ENCODE measurements at regions of chr1 and their contacts with region 1.

Region 1: DNA sequence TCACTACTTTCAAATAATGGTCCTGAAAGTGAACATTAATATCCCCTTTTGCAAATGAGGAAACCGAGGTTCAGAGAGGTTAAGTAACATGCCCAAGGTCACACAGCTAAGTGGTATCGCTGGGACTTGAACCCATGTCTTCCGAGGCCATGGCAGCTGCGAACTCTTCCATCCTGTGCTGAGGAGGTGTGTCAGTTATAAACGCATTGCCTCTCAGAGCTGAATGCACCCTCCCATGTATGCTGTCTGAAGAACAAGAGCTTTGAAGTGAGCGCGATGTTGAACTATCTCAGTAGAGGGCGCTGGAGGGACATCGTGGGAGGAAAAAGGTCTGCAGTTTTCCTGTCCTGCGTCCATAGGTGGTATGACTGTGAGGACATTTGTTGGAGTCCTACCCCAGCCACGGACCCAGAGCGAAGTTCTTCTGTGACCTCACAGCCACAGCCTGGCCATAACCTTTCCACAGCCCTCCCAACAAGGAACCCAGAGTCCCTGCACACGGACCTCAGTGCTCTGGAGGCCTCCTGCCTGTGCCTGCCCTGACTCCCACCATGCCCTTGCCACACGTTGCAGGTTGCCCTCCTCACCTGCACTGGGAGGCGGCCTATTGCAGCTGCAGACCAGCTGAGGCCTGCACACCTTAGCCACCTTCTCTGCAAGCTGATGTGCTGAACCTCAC is 7.5 kb downstream of the MYOC start:
- DNase-seq: peak; percentile 87
- H3K4me3 Mint-ChIP-seq: peak overlapping the region; percentile 2
- H3K27ac Mint-ChIP-seq: no peak overlapping the region
- H3K4me1 Mint-ChIP-seq: peaks cover 25% of the 10 kb centered on the region
- H3K27me3 Mint-ChIP-seq: peaks cover 19% of the 10 kb centered on the region
- CTCF ChIP-seq: peak; percentile 88

Region 2: DNA sequence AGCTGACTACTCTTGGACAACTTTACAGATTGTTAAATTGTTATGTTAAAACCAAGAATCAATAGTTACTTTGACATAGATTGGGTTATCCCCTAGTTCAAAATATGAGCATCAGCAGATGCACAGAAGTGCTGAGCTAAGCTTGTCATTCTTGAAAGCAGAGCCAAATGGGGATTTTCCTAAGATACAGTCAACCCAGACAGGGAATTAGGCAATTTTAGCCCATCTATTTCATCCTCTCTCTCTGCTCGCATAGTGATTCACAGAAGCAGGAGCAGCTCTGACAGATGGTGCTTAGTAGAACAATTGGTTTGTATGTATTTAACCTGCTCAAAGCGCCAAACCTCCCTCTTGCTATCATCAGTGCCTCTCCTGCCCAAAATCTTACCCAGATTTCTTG is 187.5 kb before region 1 on chr1:
- CTCF ChIA-PET with region 1: no interaction called
- intact Hi-C with region 1: no loop called
- DNase-seq: no peak
- H3K4me3 Mint-ChIP-seq: no peak overlapping the region
- H3K27ac Mint-ChIP-seq: no peak overlapping the region
- H3K4me1 Mint-ChIP-seq: no peaks in the 10 kb centered on the region
- H3K27me3 Mint-ChIP-seq: no peaks in the 10 kb centered on the region
- CTCF ChIP-seq: no peak

Region 3: GRCh38 chr1:171654942-171655745 is 10.2 kb after region 1 on chr1:
- CTCF ChIA-PET with region 1: interaction called, 11 read pairs
- intact Hi-C with region 1: no loop called
- DNase-seq: peak; percentile 50
- H3K4me3 Mint-ChIP-seq: no peak overlapping the region
- H3K27ac Mint-ChIP-seq: no peak overlapping the region
- H3K4me1 Mint-ChIP-seq: peaks cover 28% of the 10 kb centered on the region
- H3K27me3 Mint-ChIP-seq: no peaks in the 10 kb centered on the region
- CTCF ChIP-seq: peak; percentile 58

Region 4: DNA sequence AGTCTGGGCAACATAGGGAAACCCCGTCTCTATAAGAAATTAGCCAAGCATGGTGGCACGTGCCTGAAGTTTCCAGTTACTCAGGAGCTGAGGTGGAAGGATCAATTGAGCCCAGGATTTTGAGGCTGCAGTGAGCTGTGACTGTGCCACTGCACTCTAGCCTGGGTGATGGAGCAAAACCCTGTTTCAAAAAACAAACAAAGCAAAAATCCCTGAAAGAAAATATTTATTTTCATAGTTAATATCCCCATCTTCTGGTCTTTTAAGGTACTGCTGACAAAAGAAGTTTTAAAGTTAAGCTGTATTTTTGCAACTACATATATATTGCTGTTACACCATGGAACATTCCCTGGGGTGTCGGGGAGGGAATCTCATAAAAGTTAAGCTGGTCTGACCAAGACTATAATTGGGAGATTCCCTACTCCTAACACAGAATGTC is 70.9 kb after region 1 on chr1:
- CTCF ChIA-PET with region 1: interaction called, 55 read pairs
- intact Hi-C with region 1: loop called (anchors 1 kb)
- DNase-seq: no peak
- H3K4me3 Mint-ChIP-seq: no peak overlapping the region
- H3K27ac Mint-ChIP-seq: no peak overlapping the region
- H3K4me1 Mint-ChIP-seq: no peaks in the 10 kb centered on the region
- H3K27me3 Mint-ChIP-seq: no peaks in the 10 kb centered on the region
- CTCF ChIP-seq: peak; percentile 36

Region 5: DNA sequence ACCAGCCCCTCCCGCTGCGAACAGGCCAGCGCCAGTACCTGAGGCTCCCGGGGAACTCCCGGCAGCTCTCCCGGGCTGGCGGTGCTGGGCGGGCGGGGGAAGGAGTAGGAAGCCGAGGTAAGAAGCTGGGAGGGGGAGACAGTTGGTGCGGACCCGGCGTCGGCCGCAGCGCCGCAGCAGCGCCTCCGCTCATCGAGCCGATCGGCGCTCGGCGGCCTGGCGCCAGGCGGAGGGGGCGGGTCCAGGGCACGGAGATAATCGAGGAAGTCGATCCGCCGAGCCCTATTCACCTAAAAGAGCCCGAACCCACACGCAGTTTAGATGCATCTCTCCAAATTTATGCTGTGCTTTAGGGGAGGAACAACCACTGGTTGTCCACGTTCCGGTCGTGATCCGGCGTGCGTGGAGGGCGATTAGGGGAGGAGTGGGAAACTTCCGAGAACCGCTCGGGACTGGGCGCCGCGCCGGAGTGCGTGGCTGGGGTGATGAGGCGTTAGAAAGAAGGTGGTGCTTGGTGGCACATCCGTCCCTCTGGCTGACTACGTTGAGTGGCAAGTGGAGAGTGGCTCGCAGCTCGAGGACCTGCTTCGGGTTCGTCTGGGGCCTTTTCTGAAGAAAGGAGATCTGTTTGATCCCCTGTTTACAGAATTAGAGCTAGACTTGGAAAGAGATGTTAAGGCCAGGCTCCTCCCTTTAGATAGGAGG is 97.1 kb after region 1 on chr1 and contains the start of gene VAMP4:
- CTCF ChIA-PET with region 1: interaction called, 12 read pairs
- intact Hi-C with region 1: no loop called
- DNase-seq: peak; percentile 89
- H3K4me3 Mint-ChIP-seq: peak within 1 kb of the TSS; percentile 89
- H3K27ac Mint-ChIP-seq: peak within 1 kb of the TSS; percentile 95
- H3K4me1 Mint-ChIP-seq: peaks cover 22% of the 10 kb centered on the region
- H3K27me3 Mint-ChIP-seq: no peaks in the 10 kb centered on the region
- CTCF ChIP-seq: no peak
- total RNA-seq, gene VAMP4: 7.4 and 7.5 TPM in 2 replicates

Region 6: GRCh38 chr1:171772312-171772711 is 127.4 kb after region 1 on chr1:
- CTCF ChIA-PET with region 1: no interaction called
- intact Hi-C with region 1: loop called (anchors 10 kb)
- DNase-seq: no peak
- H3K4me3 Mint-ChIP-seq: no peak overlapping the region
- H3K27ac Mint-ChIP-seq: no peak overlapping the region
- H3K4me1 Mint-ChIP-seq: no peaks in the 10 kb centered on the region
- H3K27me3 Mint-ChIP-seq: peaks cover 8% of the 10 kb centered on the region
- CTCF ChIP-seq: no peak

Region 7: GRCh38 chr1:171801487-171801891 is 156.5 kb after region 1 on chr1:
- CTCF ChIA-PET with region 1: interaction called, 6 read pairs
- intact Hi-C with region 1: loop called (anchors 10 kb)
- DNase-seq: peak; percentile 40
- H3K4me3 Mint-ChIP-seq: no peak overlapping the region
- H3K27ac Mint-ChIP-seq: no peak overlapping the region
- H3K4me1 Mint-ChIP-seq: peaks cover 8% of the 10 kb centered on the region
- H3K27me3 Mint-ChIP-seq: no peaks in the 10 kb centered on the region
- CTCF ChIP-seq: peak; percentile 74

Region 8: DNA sequence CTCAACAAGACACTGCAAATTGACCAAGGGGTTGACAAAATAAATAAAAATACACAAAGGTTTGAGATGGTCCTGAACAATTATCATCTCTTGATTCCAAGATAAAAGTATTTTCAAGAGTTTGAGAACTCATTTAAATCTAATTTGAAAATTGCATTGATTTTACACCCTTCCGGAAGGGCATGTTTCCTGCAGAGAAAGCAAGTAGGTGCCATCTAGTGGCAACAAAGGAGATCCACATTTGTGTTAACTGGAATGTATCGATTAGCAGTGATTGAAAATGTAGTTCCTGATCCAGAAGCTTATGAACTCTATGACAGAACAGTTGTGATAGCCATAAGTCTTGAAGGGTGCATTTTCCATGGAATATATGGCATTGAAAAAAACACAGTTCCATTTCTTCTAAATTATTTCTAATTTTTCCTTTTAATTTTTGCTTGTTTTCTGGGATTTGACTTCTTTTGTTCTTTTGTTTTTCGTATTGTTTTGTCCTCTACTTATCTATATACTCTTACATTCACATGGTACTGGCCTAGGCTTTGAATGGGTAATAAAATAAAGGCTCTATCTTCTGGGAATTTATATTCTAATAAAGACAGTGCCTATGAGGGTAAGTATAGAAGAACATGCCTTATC is 340.0 kb after region 1 on chr1:
- CTCF ChIA-PET with region 1: interaction called, 12 read pairs
- intact Hi-C with region 1: loop called (anchors 1 kb)
- DNase-seq: no peak
- H3K4me3 Mint-ChIP-seq: no peak overlapping the region
- H3K27ac Mint-ChIP-seq: no peak overlapping the region
- H3K4me1 Mint-ChIP-seq: peaks cover 14% of the 10 kb centered on the region
- H3K27me3 Mint-ChIP-seq: no peaks in the 10 kb centered on the region
- CTCF ChIP-seq: peak; percentile 89

Region 9: DNA sequence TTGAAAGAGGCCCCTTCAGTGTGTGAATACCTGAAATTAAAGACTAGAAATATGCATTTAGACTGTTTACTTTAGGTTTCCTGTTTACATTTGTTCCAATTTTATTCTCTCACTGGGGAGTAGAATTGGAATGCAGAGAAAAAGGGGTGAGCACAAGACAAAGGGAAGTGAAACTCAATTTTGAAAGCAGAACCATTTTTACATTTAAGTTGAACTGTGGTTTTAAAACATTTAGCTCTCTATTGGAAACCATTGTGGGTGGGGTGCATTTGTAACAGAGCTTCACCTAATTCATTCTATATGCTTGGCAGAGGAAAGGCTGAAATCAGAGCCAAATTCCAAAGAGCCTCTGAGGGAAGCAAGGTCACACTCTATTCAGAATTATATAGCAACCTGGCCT is 540.3 kb after region 1 on chr1:
- CTCF ChIA-PET with region 1: no interaction called
- intact Hi-C with region 1: no loop called
- DNase-seq: no peak
- H3K4me3 Mint-ChIP-seq: no peak overlapping the region
- H3K27ac Mint-ChIP-seq: no peak overlapping the region
- H3K4me1 Mint-ChIP-seq: peaks cover 16% of the 10 kb centered on the region
- H3K27me3 Mint-ChIP-seq: no peaks in the 10 kb centered on the region
- CTCF ChIP-seq: no peak